ENCODE measurements at regions of chrX and their contacts with region 1.

Region 1: DNA sequence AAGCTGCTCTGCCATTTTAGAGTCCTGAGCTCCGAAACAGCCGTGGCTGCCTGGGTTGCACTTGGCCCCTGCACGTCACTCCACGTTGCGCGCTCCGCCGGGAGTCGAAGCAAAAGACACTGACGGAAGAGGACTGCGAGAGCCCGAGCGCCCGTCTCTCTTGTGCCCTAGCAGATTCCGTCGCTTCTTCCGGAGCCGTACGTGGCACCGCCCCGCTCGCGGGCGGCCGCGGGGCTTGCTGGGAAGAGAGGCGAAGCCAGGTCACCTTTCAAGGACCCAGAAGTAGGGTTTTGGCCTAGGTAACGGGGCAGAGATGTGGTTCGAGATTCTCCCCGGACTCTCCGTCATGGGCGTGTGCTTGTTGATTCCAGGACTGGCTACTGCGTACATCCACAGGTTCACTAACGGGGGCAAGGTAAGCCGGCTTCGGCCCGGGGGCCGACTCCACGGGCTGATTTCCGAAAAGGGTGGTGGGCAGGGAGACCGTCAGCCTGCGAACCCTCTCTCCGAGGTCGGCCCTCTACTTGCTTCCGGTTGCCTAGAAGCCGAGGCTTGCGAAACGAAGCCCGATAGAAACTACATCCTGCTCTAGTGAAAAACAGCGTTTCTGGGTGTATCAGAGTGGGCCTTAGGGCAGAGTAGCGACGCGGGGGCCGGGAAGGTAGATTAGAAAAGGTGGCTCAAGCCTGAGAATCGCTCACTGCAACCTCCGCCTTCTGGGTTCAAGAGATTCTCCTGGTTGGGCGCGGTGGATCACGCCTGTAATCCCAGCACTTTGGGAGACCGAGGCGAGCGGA is at the starts of genes NDUFA1 and RNF113A:
- DNase-seq: peak; percentile 86
- H3K4me3 Mint-ChIP-seq: peak within 1 kb of the TSS; percentile 91
- H3K27ac Mint-ChIP-seq: peak within 1 kb of the TSS; percentile 83
- H3K4me1 Mint-ChIP-seq: no peaks in the 10 kb centered on the region
- H3K27me3 Mint-ChIP-seq: no peaks in the 10 kb centered on the region
- CTCF ChIP-seq: no peak
- total RNA-seq, gene NDUFA1: 76.7 and 82.8 TPM in 2 replicates
- total RNA-seq, gene RNF113A: 19.0 and 23.0 TPM in 2 replicates

Region 2: DNA sequence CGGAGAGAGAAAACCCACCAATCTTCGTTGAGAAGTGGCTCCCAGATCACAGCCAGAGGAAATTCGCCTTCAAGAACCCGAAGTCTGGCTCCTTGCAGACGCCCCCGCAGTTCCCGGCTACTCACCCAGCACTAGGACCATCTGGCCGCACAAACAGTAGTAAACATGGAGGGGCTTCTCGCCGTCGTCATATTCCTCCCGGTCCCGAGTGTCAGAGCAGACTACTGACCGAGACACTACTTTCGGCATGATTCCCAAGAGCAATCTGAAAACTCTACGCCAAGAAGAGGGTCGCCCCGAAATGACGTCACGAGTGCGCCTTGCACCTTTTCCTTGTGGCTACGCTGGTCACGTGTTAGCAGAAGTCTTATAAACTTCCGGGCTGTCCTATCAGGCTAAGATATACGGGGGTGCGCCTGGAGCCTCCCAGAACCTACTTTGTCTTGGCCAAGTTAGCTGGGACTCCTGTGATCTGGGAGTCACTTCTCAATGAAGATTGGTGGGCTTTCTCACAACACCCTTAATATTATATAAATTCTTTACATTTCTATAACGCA is 306.6 kb before region 1 on chrX and contains the start of gene STEEP1:
- CTCF ChIA-PET with region 1: no interaction called
- POLR2A ChIA-PET with region 1: no interaction called
- intact Hi-C with region 1: no loop called
- DNase-seq: peak; percentile 91
- H3K4me3 Mint-ChIP-seq: peak within 1 kb of the TSS; percentile 77
- H3K27ac Mint-ChIP-seq: peak within 1 kb of the TSS; percentile 86
- H3K4me1 Mint-ChIP-seq: no peaks in the 10 kb centered on the region
- H3K27me3 Mint-ChIP-seq: peaks cover 17% of the 10 kb centered on the region
- CTCF ChIP-seq: no peak
- total RNA-seq, gene STEEP1: 23.6 and 27.1 TPM in 2 replicates

Region 3: DNA sequence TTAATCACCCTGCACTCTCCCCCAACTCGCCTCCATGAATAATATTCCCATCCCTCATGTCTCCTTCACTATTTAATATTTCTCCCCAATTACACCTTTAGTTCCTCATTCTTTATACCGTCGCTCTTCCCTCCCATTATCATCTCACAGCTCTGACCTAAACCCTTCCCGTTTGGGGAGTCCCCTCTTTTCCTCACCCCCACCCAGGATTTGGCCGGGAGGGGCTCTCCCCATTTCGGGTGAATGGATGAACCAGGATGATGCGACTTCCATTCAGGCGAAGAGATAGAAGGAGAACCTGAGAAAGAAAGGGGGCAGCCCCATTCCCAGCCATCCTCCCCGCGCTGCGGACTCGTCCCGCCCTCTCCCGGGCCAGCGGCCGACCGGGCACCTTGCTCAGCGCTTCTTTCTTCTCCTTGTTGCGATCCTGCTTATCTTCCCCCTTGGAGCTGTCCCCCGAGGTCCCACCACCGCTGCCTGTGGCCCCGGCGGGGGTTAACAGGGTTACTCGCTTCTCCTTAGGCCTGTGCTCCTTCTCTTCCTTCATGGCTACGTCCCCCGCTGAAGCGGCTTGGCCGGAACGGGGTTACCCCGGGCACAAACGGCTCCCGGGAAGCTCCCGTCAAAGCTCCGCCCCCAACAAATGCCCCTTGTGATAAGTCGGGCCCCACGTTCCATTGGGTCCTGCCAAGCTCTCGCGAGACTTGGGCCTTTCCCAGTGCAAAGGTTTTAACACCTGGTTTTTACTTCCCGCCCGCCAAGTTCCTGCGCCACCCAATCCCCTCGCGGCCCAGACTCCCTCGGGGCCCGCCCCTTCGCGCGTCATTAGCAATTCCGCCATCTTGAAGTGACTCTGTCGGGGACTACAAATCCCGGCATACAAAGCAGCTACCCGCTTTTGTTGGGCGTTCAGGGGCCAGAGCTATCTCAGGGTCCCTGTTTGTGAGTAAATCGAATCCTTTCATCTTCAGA is 19.1 kb before region 1 on chrX and contains the start of gene UPF3B:
- CTCF ChIA-PET with region 1: no interaction called
- POLR2A ChIA-PET with region 1: interaction called, 74 read pairs
- intact Hi-C with region 1: no loop called
- DNase-seq: peak; percentile 98
- H3K4me3 Mint-ChIP-seq: peak within 1 kb of the TSS; percentile 97
- H3K27ac Mint-ChIP-seq: peak within 1 kb of the TSS; percentile 98
- H3K4me1 Mint-ChIP-seq: no peaks in the 10 kb centered on the region
- H3K27me3 Mint-ChIP-seq: no peaks in the 10 kb centered on the region
- CTCF ChIP-seq: no peak
- total RNA-seq, gene UPF3B: 17.4 and 18.5 TPM in 2 replicates

Measured in MCF 10A (cell line).